ENCODE measurements at regions of chr11 and their contacts with region 1.

Region 1: GRCh38 chr11:30143098-30143705 is 87.6 kb upstream of the FSHB start:
- DNase-seq: no peak
- ATAC-seq: no peak

Region 2: DNA sequence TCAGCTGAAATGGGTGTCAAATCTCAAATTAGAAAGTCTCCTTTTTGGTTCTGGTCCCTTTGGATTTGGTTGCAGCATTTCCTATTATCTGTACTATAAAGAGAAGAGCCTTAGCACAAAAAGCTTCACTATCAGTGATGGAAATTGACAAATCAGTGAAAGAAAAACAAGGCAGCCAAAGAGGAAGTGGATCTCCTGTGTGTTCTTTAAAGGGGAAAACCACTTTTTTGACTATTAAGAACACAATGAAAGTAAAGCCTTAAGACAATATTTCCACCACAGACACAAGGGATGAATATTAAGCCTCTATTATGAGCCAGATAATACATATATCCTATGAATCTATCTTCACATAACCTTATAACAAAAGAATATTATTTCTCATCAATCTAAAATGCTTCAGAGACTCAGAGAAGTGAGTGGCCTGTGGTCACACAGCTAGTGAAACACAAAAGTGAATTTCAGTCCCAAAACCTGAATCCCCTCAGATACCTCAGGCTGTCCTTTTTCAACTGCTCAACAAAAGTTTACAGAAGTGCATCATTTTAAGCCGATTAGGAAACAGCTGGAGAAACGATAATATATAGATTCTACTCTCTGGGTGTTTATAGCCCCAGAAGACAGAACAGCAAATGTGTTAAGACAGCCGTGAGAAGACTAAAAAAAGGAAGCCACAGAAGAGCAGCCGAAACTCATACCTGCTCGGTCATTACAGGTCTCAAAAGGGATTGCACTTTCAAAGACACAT is 63.2 kb after region 1 on chr11:
- intact Hi-C with region 1: no loop called
- DNase-seq: no peak
- ATAC-seq: no peak

Region 3: DNA sequence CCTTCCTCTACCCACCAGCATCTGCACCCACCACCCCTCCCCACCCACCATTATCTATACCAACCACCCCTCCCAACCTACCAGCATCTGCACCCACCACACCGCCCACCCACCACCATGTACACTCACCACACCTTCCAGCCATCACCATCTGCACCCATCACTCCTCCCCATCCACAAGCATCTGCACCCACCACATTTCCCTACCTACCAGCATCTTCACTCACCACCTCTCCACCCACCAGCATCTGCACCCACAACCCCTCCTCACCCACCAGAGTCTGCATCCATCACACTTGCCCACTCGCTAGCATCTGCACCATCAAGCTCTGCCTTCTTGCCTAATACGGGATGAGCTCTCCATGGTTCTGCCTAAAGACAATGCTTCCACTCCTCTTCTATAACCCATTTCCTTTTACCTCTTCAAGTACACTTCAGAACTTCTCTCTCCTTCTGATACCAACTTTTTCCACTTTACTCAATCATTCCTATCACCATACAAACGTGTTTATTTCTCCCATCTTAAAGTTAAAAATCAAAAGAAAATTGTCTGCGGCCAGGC is 85.2 kb after region 1 on chr11:
- intact Hi-C with region 1: loop called (anchors 2 kb)
- DNase-seq: no peak
- ATAC-seq: no peak